ENCODE measurements at regions of chr9 and their contacts with region 1.

Region 1: GRCh38 chr9:15915711-15916110 is 362.9 kb downstream of the CCDC171 start:
- DNase-seq: no peak
- ATAC-seq: no peak
- H3K4me3 ChIP-seq: no peak overlapping the region
- H3K27ac ChIP-seq: no peak overlapping the region
- H3K4me1 ChIP-seq: no peaks in the 10 kb centered on the region
- H3K27me3 ChIP-seq: no peaks in the 10 kb centered on the region
- CTCF ChIP-seq: no peak

Region 2: DNA sequence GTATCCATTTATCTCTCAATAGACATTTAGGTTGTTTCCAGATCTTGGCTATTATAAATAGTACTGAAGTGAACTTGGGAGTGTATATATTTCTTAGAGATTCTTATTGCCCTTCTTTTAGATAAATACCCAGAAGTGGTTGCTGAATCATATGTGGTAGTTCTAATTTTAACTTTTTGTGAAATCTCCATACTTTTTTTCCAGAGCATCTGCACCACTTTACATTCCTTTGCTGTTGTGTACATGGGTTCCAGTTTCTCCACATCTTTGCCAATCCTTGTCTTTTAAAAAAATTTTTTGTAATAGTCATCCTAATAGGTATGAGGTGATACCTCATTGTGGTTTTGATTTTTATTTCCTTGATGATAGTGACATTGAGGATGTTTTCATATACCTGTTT is 59.1 kb before region 1 on chr9:
- intact Hi-C with region 1: loop called in 1 of 10 experiments (anchors 10 kb)
- DNase-seq: no peak
- ATAC-seq: no peak
- H3K4me3 ChIP-seq: no peak overlapping the region
- H3K27ac ChIP-seq: no peak overlapping the region
- H3K4me1 ChIP-seq: no peaks in the 10 kb centered on the region
- H3K27me3 ChIP-seq: no peaks in the 10 kb centered on the region
- CTCF ChIP-seq: no peak

Region 3: GRCh38 chr9:15882328-15882727 is 33.4 kb before region 1 on chr9:
- intact Hi-C with region 1: no loop called
- DNase-seq: no peak
- ATAC-seq: no peak
- H3K4me3 ChIP-seq: no peak overlapping the region
- H3K27ac ChIP-seq: no peak overlapping the region
- H3K4me1 ChIP-seq: no peaks in the 10 kb centered on the region
- H3K27me3 ChIP-seq: no peaks in the 10 kb centered on the region
- CTCF ChIP-seq: no peak